MCF 10A (cell line): ENCODE measurements at regions of chr6 and their contacts with region 1.

Region 1: DNA sequence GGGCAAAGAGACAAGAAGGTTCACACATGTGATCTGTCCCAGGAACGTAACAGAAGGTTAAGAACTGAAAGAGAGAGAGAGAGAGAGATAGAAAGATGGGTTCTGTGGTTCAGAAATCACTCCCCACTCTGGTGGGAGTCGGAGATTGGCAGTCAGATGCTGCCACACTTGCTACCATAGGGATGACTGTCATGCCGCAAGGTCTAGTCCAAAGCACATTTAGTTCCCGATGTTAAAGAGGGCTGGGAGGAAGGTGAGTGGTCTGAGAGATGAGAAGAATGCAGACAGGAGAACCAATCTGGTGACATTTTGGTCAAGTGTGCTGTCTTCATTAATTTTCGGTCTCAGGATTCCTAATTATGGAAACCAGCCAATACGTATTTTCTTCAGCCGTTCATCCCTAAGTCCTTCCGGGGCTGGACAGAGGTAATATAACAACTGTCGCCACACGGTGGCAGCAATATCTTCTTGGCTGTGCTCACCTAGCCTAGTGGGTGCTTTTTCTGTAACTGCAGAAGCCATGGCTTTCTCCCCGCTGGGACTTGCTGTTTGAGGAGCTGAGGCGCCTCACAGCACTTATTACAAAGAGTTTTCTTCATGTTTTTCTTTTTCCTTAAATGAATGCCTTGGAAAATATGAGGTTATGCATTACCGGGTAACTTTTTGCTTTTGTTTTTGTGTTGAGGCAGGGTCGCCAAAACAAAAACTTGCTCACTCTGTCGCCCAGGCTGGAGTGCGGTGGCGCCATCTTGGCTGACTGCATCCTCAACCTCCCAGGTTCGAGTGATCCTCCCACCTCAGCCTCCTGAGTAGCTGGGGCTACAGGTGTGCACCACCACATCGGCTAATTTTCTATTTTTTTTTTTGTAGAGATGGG is 46.0 kb downstream of the SLC35D3 start:
- DNase-seq: peak; percentile 85
- H3K4me3 Mint-ChIP-seq: no peak overlapping the region
- H3K27ac Mint-ChIP-seq: no peak overlapping the region
- H3K4me1 Mint-ChIP-seq: peaks cover 5% of the 10 kb centered on the region
- H3K27me3 Mint-ChIP-seq: no peaks in the 10 kb centered on the region
- CTCF ChIP-seq: peak; percentile 51

Region 2: GRCh38 chr6:136846046-136846445 is 122.1 kb before region 1 on chr6:
- CTCF ChIA-PET with region 1: interaction called, 7 read pairs
- POLR2A ChIA-PET with region 1: no interaction called
- intact Hi-C with region 1: loop called (anchors 2 kb)
- DNase-seq: peak; percentile 63
- H3K4me3 Mint-ChIP-seq: no peak overlapping the region
- H3K27ac Mint-ChIP-seq: no peak overlapping the region
- H3K4me1 Mint-ChIP-seq: peaks cover 9% of the 10 kb centered on the region
- H3K27me3 Mint-ChIP-seq: no peaks in the 10 kb centered on the region
- CTCF ChIP-seq: peak; percentile 53

Region 3: GRCh38 chr6:136983687-136984086 is 15.6 kb after region 1 on chr6:
- CTCF ChIA-PET with region 1: interaction called, 8 read pairs
- POLR2A ChIA-PET with region 1: interaction called, 10 read pairs
- intact Hi-C with region 1: no loop called
- DNase-seq: no peak
- H3K4me3 Mint-ChIP-seq: no peak overlapping the region
- H3K27ac Mint-ChIP-seq: no peak overlapping the region
- H3K4me1 Mint-ChIP-seq: peaks cover 7% of the 10 kb centered on the region
- H3K27me3 Mint-ChIP-seq: peaks cover 14% of the 10 kb centered on the region
- CTCF ChIP-seq: no peak